H1 (cell line): ENCODE measurements at regions of chr2 and their contacts with region 1.

Region 1: GRCh38 chr2:197487385-197487784 is 12.3 kb downstream of the HSPD1 start:
- DNase-seq: no peak
- H3K4me3 ChIP-seq: no peak overlapping the region
- H3K27ac ChIP-seq: no peak overlapping the region
- H3K4me1 ChIP-seq: no peaks in the 10 kb centered on the region
- H3K27me3 ChIP-seq: no peaks in the 10 kb centered on the region
- CTCF ChIP-seq: no peak
- EP300 ChIP-seq: no peak
- POLR2A ChIP-seq: no peak
- RAD21 ChIP-seq: no peak

Region 2: GRCh38 chr2:197405582-197405981 is 81.8 kb before region 1 on chr2:
- CTCF ChIA-PET with region 1: no interaction called
- POLR2A ChIA-PET with region 1: interaction called, 12 read pairs
- DNase-seq: no peak
- H3K4me3 ChIP-seq: no peak overlapping the region
- H3K27ac ChIP-seq: no peak overlapping the region
- H3K4me1 ChIP-seq: no peaks in the 10 kb centered on the region
- H3K27me3 ChIP-seq: no peaks in the 10 kb centered on the region
- CTCF ChIP-seq: no peak
- EP300 ChIP-seq: no peak
- POLR2A ChIP-seq: no peak
- RAD21 ChIP-seq: no peak

Region 3: GRCh38 chr2:197464175-197464574 is 23.2 kb before region 1 on chr2:
- CTCF ChIA-PET with region 1: interaction called, 3 read pairs
- POLR2A ChIA-PET with region 1: interaction called, 14 read pairs
- DNase-seq: no peak
- H3K4me3 ChIP-seq: no peak overlapping the region
- H3K27ac ChIP-seq: no peak overlapping the region
- H3K4me1 ChIP-seq: no peaks in the 10 kb centered on the region
- H3K27me3 ChIP-seq: no peaks in the 10 kb centered on the region
- CTCF ChIP-seq: no peak
- EP300 ChIP-seq: no peak
- POLR2A ChIP-seq: no peak
- RAD21 ChIP-seq: no peak

Region 4: DNA sequence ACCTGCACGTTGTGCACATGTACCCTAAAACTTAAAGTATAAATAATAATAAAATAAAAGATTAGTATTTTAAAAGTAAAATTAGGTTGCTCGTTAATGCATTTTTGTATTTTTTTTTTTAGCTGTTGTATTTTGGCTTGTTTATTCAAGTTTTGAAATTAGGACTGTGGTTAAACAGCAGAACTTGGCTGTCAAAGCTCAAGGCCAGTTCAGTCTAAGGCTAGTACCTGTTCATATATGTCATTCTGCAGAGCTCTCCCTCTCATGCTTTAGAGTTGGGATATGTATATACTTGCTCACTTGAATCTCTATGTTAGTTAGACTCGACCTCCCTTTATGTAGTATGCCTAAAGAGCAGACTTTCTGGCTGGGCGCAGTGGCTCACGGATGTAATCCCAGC is 61.2 kb after region 1 on chr2:
- CTCF ChIA-PET with region 1: no interaction called
- POLR2A ChIA-PET with region 1: no interaction called
- DNase-seq: no peak
- H3K4me3 ChIP-seq: no peak overlapping the region
- H3K27ac ChIP-seq: no peak overlapping the region
- H3K4me1 ChIP-seq: no peaks in the 10 kb centered on the region
- H3K27me3 ChIP-seq: no peaks in the 10 kb centered on the region
- CTCF ChIP-seq: no peak
- EP300 ChIP-seq: no peak
- POLR2A ChIP-seq: no peak
- RAD21 ChIP-seq: no peak